ENCODE measurements at regions of chr19 and their contacts with region 1.

Region 1: DNA sequence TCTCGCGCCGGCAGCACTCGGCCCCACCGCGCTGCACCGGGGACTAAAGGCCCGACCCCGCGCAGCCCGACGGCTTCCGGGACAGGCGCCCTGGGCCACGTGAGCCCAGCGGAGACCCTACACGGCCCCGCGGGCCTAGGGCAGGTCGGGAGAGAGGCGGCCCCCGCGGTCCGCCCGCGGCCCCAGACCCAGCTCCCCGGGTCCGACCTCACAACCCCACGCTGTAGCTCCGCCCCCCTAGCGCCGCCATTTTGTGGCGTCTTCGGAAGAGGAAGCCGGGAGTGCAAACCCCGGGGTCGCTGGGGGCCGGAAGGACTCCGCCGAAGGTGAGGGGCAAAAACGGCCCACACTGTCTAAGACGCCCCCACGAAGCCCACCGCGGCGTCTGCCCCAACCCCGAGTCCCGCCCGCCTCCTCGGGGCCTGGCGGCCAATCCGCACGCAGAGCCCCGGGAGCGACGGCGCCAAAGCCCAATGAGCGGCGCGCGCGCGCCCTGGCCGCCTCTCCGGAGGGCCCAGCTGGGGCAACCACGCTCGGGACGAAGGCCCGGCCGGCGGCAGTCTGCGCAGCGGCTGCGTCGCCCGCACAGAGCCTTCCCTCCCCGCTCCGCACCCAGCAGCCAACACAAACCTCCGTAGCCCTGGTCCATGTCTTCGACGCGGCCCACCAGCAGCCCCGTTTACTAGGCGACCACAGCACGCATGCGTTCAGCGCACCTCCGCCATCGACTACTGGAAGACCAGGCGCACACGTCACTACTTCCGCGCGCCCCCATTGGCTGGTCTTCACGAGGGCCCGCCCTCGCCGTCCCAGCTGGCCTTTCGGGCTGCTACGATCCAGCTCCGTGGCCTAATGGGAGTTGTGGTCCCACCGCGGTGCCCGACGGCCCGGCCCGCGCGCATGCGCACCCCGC is at the start of gene AKAP8:
- DNase-seq: peak; percentile 98 to 99 (median 98)
- H3K4me3 ChIP-seq: peak within 1 kb of the TSS; percentile 88 to 100
- H3K4me3 Mint-ChIP-seq: peak within 1 kb of the TSS; percentile 98 to 100 (median 100)
- H3K27ac ChIP-seq: peak within 1 kb of the TSS; percentile 99
- H3K27ac Mint-ChIP-seq: peak within 1 kb of the TSS; percentile 99 to 100 (median 100)
- H3K4me1 ChIP-seq: peaks cover 38% of the 10 kb centered on the region
- H3K4me1 Mint-ChIP-seq: peaks cover 25 to 48% (median 34%) of the 10 kb centered on the region in 4 donors
- H3K27me3 ChIP-seq: no peaks in the 10 kb centered on the region
- H3K27me3 Mint-ChIP-seq: no peaks in the 10 kb centered on the region
- total RNA-seq, gene AKAP8: 69.9 to 71.5 TPM

Region 2: DNA sequence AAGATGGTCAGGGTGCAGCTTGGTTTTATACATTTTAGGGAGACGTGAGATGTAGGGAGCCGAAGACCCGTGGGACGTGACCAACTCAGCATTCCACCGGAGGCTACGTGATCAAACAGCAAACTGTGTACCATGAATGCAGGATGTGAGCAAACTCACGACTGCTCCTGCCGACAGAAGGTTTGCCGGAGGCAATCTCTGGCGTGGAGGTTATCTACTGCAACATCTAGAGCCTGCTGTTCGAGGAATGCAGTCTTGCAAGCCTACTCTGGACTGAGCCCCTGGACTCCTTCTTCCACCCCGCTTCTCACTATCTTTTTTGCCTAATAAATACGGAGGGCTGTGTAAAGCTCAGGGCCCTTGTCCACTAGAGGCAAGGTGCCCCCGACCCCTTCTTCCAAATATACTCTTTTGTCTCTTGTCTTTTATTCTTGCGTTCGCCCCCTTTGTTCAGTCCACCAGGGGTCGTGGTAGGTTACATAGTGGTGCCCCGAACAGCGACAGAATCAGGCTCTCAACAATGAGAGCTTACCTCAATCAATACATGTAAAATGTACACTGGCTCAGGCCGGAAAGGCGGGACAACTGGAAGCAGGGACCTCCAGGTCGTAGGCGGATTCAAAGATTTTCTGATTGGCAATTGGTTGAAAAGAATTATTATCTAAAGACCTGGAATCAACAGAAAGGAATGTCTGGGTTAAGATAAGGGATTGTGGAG is 306.2 kb before region 1 on chr19:
- CTCF ChIA-PET with region 1: no interaction called
- POLR2A ChIA-PET with region 1: no interaction called
- intact Hi-C with region 1: no loop called
- DNase-seq: no peak
- H3K4me3 ChIP-seq: no peak overlapping the region
- H3K4me3 Mint-ChIP-seq: no peak overlapping the region
- H3K27ac ChIP-seq: no peak overlapping the region
- H3K27ac Mint-ChIP-seq: no peak overlapping the region
- H3K4me1 ChIP-seq: no peaks in the 10 kb centered on the region
- H3K4me1 Mint-ChIP-seq: no peaks in the 10 kb centered on the region
- H3K27me3 ChIP-seq: no peaks in the 10 kb centered on the region
- H3K27me3 Mint-ChIP-seq: peaks cover 3 to 15% of the 10 kb centered on the region in 2 donors

Region 3: DNA sequence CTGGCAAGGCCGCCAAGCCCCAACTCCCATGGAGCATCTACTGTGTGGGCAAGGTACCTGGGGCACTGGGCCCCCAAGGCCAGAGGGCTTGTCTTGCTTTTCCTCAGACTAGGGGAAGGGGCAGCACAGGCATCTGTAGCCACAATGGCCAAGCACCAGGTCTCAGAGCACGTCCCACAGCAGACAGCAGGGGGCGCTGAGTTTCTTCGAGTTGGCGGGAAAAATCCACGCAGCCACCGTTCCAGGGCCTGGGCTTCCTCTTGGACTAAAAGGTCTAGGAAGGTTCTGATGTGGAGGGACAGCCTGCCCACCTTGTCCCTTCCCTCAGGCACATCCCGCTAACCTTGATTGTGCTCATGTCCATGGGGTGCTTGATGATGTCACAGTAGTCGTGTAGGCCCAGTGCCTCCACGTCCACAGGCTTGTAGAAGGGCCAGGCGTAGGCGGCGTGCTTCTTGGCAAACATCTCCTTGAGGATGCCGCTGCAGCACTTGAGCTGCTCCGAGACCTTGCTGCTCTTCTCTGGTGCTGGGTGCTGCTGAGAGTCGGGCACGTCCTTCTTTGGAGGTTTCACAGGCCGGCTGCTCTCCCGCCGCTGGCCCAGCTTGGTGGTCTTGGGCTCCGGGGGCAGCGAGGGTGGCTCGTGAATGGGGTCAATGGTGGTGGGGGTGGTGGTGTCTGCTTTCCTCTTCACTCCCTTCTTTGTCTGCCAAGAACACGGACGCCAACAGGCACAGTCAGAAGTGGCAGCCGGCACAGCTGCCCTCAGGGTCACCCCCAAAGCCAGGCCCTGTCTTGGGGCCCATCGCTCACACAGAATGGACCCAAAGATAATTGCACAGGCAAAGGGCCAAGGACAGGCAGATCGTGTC is 115.0 kb before region 1 on chr19:
- CTCF ChIA-PET with region 1: interaction called, 7 read pairs
- POLR2A ChIA-PET with region 1: no interaction called
- intact Hi-C with region 1: loop called (anchors 2 kb)
- DNase-seq: peak; percentile 51 to 66 (median 62)
- H3K4me3 ChIP-seq: no peak overlapping the region
- H3K4me3 Mint-ChIP-seq: no peak overlapping the region
- H3K27ac ChIP-seq: no peak overlapping the region
- H3K27ac Mint-ChIP-seq: peak overlapping the region in 2 of 7 donors; percentile 52 to 61
- H3K4me1 ChIP-seq: no peaks in the 10 kb centered on the region
- H3K4me1 Mint-ChIP-seq: peaks cover 2 to 13% (median 8%) of the 10 kb centered on the region in 4 donors
- H3K27me3 ChIP-seq: no peaks in the 10 kb centered on the region
- H3K27me3 Mint-ChIP-seq: no peaks in the 10 kb centered on the region

Region 4: GRCh38 chr19:15332311-15332996 is 46.9 kb before region 1 on chr19 and contains the start of gene BRD4:
- CTCF ChIA-PET with region 1: interaction called, 7 read pairs
- POLR2A ChIA-PET with region 1: interaction called, 58 read pairs
- intact Hi-C with region 1: loop called (anchors 1 kb)
- DNase-seq: peak; percentile 69 to 82 (median 78)
- H3K4me3 ChIP-seq: peak within 1 kb of the TSS; percentile 84 to 87
- H3K4me3 Mint-ChIP-seq: peak within 1 kb of the TSS; percentile 94 to 97 (median 95)
- H3K27ac ChIP-seq: peak within 1 kb of the TSS; percentile 90
- H3K27ac Mint-ChIP-seq: peak within 1 kb of the TSS; percentile 91 to 99 (median 96)
- H3K4me1 ChIP-seq: peaks cover 46% of the 10 kb centered on the region
- H3K4me1 Mint-ChIP-seq: peaks cover 25 to 55% (median 39%) of the 10 kb centered on the region in 4 donors
- H3K27me3 ChIP-seq: no peaks in the 10 kb centered on the region
- H3K27me3 Mint-ChIP-seq: no peaks in the 10 kb centered on the region
- total RNA-seq, gene BRD4: 149 to 152 TPM

Region 5: DNA sequence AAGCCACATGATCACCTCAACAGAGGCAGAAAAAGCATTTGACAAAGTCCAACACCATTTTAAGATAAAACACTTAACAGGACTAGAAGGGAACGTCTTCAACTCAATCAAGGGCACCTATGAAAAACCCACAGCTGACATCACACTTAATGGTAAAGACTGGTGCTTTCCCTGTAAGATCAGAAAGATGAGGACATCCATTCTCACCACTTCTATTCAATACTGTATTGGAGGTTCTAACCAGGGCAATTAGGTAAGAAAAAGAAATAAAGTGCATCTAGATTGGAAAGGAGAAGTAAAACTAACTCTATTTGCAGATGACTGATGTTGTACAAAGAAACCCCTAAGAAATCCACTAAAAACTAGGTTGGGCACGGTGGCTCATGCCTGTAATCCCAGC is 11.5 kb after region 1 on chr19:
- CTCF ChIA-PET with region 1: no interaction called
- POLR2A ChIA-PET with region 1: interaction called, 11 read pairs
- intact Hi-C with region 1: no loop called
- DNase-seq: no peak
- H3K4me3 ChIP-seq: no peak overlapping the region
- H3K4me3 Mint-ChIP-seq: no peak overlapping the region
- H3K27ac ChIP-seq: no peak overlapping the region
- H3K27ac Mint-ChIP-seq: peak overlapping the region in 1 of 7 donors; percentile 55
- H3K4me1 ChIP-seq: no peaks in the 10 kb centered on the region
- H3K4me1 Mint-ChIP-seq: peaks cover 5 to 12% (median 8%) of the 10 kb centered on the region in 4 donors
- H3K27me3 ChIP-seq: no peaks in the 10 kb centered on the region
- H3K27me3 Mint-ChIP-seq: no peaks in the 10 kb centered on the region

Region 6: GRCh38 chr19:15449620-15450527 is 70.5 kb after region 1 on chr19 and contains the start of gene WIZ:
- CTCF ChIA-PET with region 1: interaction called, 3 read pairs
- POLR2A ChIA-PET with region 1: interaction called, 15 read pairs
- intact Hi-C with region 1: no loop called
- DNase-seq: peak; percentile 83 to 90 (median 86)
- H3K4me3 ChIP-seq: peak within 1 kb of the TSS in 1 of 2 donors; percentile 63
- H3K4me3 Mint-ChIP-seq: peak within 1 kb of the TSS; percentile 79 to 91 (median 85)
- H3K27ac ChIP-seq: peak within 1 kb of the TSS; percentile 57
- H3K27ac Mint-ChIP-seq: peak within 1 kb of the TSS; percentile 89 to 98 (median 97)
- H3K4me1 ChIP-seq: peaks cover 21% of the 10 kb centered on the region
- H3K4me1 Mint-ChIP-seq: peaks cover 8 to 31% (median 24%) of the 10 kb centered on the region in 4 donors
- H3K27me3 ChIP-seq: no peaks in the 10 kb centered on the region
- H3K27me3 Mint-ChIP-seq: no peaks in the 10 kb centered on the region
- total RNA-seq, gene WIZ: 28.7 to 30.0 TPM

Region 7: GRCh38 chr19:15555759-15556633 is 176.7 kb after region 1 on chr19:
- CTCF ChIA-PET with region 1: interaction called, 10 read pairs
- POLR2A ChIA-PET with region 1: interaction called, 43 read pairs
- intact Hi-C with region 1: loop called (anchors 1 kb)
- DNase-seq: peak; percentile 92 to 97 (median 93)
- H3K4me3 ChIP-seq: peak overlapping the region; percentile 72 to 73
- H3K4me3 Mint-ChIP-seq: peak overlapping the region; percentile 78 to 90 (median 84)
- H3K27ac ChIP-seq: peak overlapping the region; percentile 58
- H3K27ac Mint-ChIP-seq: peak overlapping the region; percentile 81 to 96 (median 94)
- H3K4me1 ChIP-seq: peaks cover 21% of the 10 kb centered on the region
- H3K4me1 Mint-ChIP-seq: peaks cover 11 to 31% (median 20%) of the 10 kb centered on the region in 4 donors
- H3K27me3 ChIP-seq: no peaks in the 10 kb centered on the region
- H3K27me3 Mint-ChIP-seq: peaks cover 0 to 4% of the 10 kb centered on the region in 2 donors

Measured in CD4-positive, alpha-beta memory T cell (primary cell).